ENCODE measurements at regions of chr1 and their contacts with region 1.

Region 1: GRCh38 chr1:152533327-152533938 is 19.2 kb downstream of the CRCT1 start:
- DNase-seq: no peak
- H3K4me3 ChIP-seq: no peak overlapping the region
- H3K27ac ChIP-seq: no peak overlapping the region
- H3K4me1 ChIP-seq: no peaks in the 10 kb centered on the region
- H3K27me3 ChIP-seq: peaks cover 0 to 8% (median 0%) of the 10 kb centered on the region in 4 donors
- CTCF ChIP-seq: peak; percentile 17 to 85 (median 58)
- POLR2A ChIP-seq: no peak

Region 2: GRCh38 chr1:152386940-152387339 is 146.5 kb before region 1 on chr1:
- intact Hi-C with region 1: no loop called
- DNase-seq: no peak
- H3K4me3 ChIP-seq: no peak overlapping the region
- H3K27ac ChIP-seq: no peak overlapping the region
- H3K4me1 ChIP-seq: peaks cover 0 to 5% (median 0%) of the 10 kb centered on the region in 3 donors
- H3K27me3 ChIP-seq: no peaks in the 10 kb centered on the region
- CTCF ChIP-seq: no peak
- POLR2A ChIP-seq: no peak

Region 3: DNA sequence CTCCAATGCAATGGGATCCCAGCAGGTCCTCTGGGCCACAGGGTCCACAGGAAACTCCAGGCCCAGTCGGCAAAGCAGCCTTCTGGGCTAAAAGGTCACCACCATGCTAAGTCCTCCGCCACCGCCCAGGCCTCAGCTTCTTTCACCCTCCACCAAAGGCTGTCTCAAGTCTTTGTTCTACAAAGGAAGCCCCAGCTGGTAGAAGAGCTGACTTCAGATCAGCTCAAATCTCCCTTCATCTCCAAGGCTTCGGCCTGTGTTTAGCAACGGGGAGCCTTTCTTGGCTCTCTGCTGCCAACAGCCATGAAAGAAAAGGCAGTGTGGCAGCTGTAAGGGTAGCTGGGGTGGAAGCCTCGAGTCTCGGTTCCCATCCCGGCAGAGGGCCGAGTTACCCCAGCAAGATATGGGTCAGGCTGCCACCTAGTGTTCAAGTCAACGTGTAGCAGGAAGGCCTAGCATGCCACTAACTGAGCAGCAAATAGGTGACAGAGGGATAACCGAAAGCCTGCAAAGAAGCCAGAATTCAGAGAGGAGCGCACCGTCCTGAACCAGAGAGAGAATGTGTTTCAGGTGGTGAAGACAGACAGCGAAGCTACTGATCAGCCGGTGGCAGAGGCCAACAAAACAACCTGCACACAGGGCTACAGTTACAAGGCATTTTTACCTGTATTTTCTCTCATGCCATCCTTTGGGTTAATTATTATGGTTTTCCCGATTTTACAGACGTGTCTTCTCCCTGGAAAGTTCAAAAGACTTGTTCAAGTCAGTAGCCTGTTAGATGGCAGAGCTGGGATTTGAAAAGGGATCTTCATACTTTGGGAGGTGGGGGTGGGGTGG is 92.6 kb before region 1 on chr1:
- intact Hi-C with region 1: no loop called
- DNase-seq: no peak
- H3K4me3 ChIP-seq: no peak overlapping the region
- H3K27ac ChIP-seq: peak overlapping the region; percentile 6 to 83 (median 78)
- H3K4me1 ChIP-seq: peaks cover 27 to 80% (median 38%) of the 10 kb centered on the region in 3 donors
- H3K27me3 ChIP-seq: no peaks in the 10 kb centered on the region
- CTCF ChIP-seq: peak; percentile 66 to 96 (median 82)
- POLR2A ChIP-seq: no peak

Region 4: GRCh38 chr1:152495066-152495675 is 38.3 kb before region 1 on chr1:
- intact Hi-C with region 1: loop called (anchors 5 kb)
- DNase-seq: no peak
- H3K4me3 ChIP-seq: no peak overlapping the region
- H3K27ac ChIP-seq: no peak overlapping the region
- H3K4me1 ChIP-seq: no peaks in the 10 kb centered on the region
- H3K27me3 ChIP-seq: no peaks in the 10 kb centered on the region
- CTCF ChIP-seq: peak in 4 of 6 experiments; percentile 15 to 84 (median 58)
- POLR2A ChIP-seq: no peak

Region 5: GRCh38 chr1:152718238-152718637 is 184.8 kb after region 1 on chr1:
- intact Hi-C with region 1: no loop called
- DNase-seq: no peak
- H3K4me3 ChIP-seq: no peak overlapping the region
- H3K27ac ChIP-seq: no peak overlapping the region
- H3K4me1 ChIP-seq: peaks cover 0 to 5% (median 0%) of the 10 kb centered on the region in 3 donors
- H3K27me3 ChIP-seq: no peaks in the 10 kb centered on the region
- CTCF ChIP-seq: no peak
- POLR2A ChIP-seq: no peak

Measured in esophagus squamous epithelium (tissue), 5 donors.